ENCODE measurements at regions of chr6 and their contacts with region 1.

Region 1: DNA sequence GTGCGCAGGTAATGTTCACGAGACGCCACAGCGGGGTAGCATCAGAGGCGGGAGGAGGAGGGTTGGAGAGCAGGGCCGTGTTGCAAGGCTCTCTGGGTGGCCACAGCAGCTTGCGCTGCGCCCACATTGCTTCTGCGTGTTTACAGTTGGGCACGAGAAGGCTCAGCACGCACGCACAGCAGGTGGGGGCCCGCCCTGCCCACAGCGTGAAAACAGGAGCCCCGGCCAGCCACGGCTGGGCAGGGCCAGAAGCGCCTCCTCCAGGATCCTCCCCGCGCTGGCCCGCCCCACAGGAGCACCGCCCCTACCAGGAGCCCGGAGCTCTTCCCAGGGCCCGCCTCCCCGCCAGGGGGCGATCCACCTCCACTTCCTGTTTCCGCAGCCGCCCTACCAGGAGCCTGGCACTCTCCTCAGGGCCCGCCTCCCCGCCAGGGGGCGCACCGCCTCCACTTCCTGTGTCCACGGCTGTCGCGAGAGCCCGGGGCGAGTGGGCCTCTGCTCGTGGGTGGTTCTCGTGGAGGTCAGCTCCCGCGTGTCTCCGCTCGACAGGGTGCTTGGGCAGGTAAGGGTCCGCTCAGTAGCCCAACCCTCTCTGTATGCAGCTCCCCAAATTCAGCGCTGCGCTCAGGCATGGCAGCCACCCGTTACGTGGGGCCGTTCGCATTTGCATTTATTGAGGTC is at the start of gene FAM50B:
- DNase-seq: peak; percentile 86
- H3K4me3 ChIP-seq: peak within 1 kb of the TSS; percentile 3 to 31 (median 12)
- H3K27ac ChIP-seq: peak within 1 kb of the TSS; percentile 21
- H3K4me1 ChIP-seq: peaks cover 4% of the 10 kb centered on the region
- H3K27me3 ChIP-seq: no peaks in the 10 kb centered on the region
- CTCF ChIP-seq: peak; percentile 87 to 92
- POLR2A ChIP-seq: peak; percentile 41
- total RNA-seq, gene FAM50B: 10.0 and 10.4 TPM in 2 replicates

Region 2: DNA sequence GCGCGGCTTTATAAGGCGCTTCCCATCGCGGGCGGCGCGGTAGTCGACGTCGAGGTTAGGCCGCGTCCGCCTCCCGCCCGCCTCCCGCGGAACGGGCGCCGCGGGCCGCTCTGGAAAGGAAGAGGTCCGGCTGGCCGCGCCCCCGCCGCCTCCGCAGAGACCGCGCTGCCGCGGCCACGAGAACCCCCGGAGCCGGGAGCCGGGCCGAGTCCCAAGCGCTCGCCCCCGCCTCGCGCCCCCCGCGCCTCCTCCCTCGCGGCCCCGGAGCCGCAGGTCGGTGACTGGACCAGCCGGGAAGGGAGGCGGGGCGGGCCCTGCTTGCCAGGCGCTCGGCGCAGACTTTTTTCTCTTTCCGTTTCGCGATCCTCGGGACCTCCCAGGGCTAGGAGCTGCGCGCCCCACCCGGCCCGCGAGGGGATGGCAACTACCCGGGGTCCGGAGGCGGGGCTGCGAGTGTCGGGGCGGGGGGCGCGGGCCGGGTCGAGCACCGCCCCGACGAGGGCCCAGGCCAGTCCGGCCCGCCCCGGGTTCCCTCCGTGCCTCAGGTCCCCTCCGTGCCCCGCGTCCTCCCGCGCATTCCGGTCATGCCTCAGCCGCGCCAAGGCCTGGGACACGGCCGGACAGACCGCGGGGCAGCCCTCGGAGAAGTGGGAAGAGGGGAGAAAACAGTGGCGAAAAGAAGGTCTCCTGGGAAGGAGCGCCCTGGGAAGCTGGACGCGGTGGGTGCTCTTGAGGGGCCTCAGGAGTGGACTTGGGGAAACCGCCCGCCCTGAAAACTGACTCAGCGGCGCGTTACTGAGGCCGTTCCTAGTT is 97.1 kb before region 1 on chr6:
- CTCF ChIA-PET with region 1: interaction called, 66 read pairs
- POLR2A ChIA-PET with region 1: interaction called, 4 read pairs
- dilution Hi-C with region 1: no loop called
- intact Hi-C with region 1: loop called (anchors 1 kb)
- DNase-seq: peak; percentile 95
- H3K4me3 ChIP-seq: peak overlapping the region; percentile 85 to 96 (median 89)
- H3K27ac ChIP-seq: peak overlapping the region; percentile 99
- H3K4me1 ChIP-seq: peaks cover 42% of the 10 kb centered on the region
- H3K27me3 ChIP-seq: no peaks in the 10 kb centered on the region
- CTCF ChIP-seq: peak; percentile 24 to 60
- POLR2A ChIP-seq: no peak

Region 3: GRCh38 chr6:3825851-3826581 is 23.0 kb before region 1 on chr6:
- CTCF ChIA-PET with region 1: interaction called, 54 read pairs
- POLR2A ChIA-PET with region 1: interaction called, 4 read pairs
- dilution Hi-C with region 1: no loop called
- intact Hi-C with region 1: loop called (anchors 1 kb)
- DNase-seq: peak; percentile 100
- H3K4me3 ChIP-seq: peak overlapping the region in 1 of 3 experiments; percentile 15
- H3K27ac ChIP-seq: peak overlapping the region; percentile 96
- H3K4me1 ChIP-seq: peaks cover 43% of the 10 kb centered on the region
- H3K27me3 ChIP-seq: no peaks in the 10 kb centered on the region
- CTCF ChIP-seq: no peak
- POLR2A ChIP-seq: no peak

Region 4: GRCh38 chr6:3873051-3873450 is 24.0 kb after region 1 on chr6:
- CTCF ChIA-PET with region 1: interaction called, 12 read pairs
- POLR2A ChIA-PET with region 1: no interaction called
- dilution Hi-C with region 1: no loop called
- intact Hi-C with region 1: no loop called
- DNase-seq: no peak
- H3K4me3 ChIP-seq: no peak overlapping the region
- H3K27ac ChIP-seq: no peak overlapping the region
- H3K4me1 ChIP-seq: peaks cover 13% of the 10 kb centered on the region
- H3K27me3 ChIP-seq: no peaks in the 10 kb centered on the region
- CTCF ChIP-seq: no peak
- POLR2A ChIP-seq: no peak

Region 5: GRCh38 chr6:3929281-3929798 is 80.3 kb after region 1 on chr6:
- CTCF ChIA-PET with region 1: interaction called, 69 read pairs
- POLR2A ChIA-PET with region 1: no interaction called
- dilution Hi-C with region 1: no loop called
- intact Hi-C with region 1: loop called (anchors 1 kb)
- DNase-seq: no peak
- H3K4me3 ChIP-seq: no peak overlapping the region
- H3K27ac ChIP-seq: no peak overlapping the region
- H3K4me1 ChIP-seq: no peaks in the 10 kb centered on the region
- H3K27me3 ChIP-seq: no peaks in the 10 kb centered on the region
- CTCF ChIP-seq: no peak
- POLR2A ChIP-seq: no peak

Region 6: DNA sequence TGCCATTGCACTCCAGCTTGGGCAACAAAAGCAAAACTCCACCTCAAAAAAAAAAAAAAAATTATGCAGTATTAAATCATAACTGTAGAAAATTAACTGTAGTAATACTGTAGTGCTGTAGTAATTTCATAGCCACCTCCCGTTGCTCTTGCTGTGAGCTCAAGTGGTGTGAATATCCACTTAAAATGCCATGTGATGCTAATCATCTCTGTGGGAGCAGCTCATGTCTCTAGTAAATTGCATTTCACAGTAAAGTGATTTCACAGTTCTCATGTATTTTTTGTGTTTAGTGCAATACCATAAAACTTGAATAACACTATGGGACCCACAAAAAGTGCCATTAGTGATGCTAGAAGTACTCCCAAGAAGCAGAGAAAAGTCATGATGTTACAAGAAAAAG is 244.2 kb after region 1 on chr6:
- CTCF ChIA-PET with region 1: no interaction called
- POLR2A ChIA-PET with region 1: no interaction called
- dilution Hi-C with region 1: no loop called
- intact Hi-C with region 1: no loop called
- DNase-seq: no peak
- H3K4me3 ChIP-seq: no peak overlapping the region
- H3K27ac ChIP-seq: no peak overlapping the region
- H3K4me1 ChIP-seq: no peaks in the 10 kb centered on the region
- H3K27me3 ChIP-seq: no peaks in the 10 kb centered on the region
- CTCF ChIP-seq: no peak
- POLR2A ChIP-seq: no peak

Region 7: GRCh38 chr6:4635666-4636065 is 786.6 kb after region 1 on chr6:
- CTCF ChIA-PET with region 1: no interaction called
- POLR2A ChIA-PET with region 1: no interaction called
- dilution Hi-C with region 1: no loop called
- intact Hi-C with region 1: no loop called
- DNase-seq: no peak
- H3K4me3 ChIP-seq: no peak overlapping the region
- H3K27ac ChIP-seq: no peak overlapping the region
- H3K4me1 ChIP-seq: peaks cover 11% of the 10 kb centered on the region
- H3K27me3 ChIP-seq: no peaks in the 10 kb centered on the region
- CTCF ChIP-seq: no peak
- POLR2A ChIP-seq: no peak

Measured in endothelial cell of umbilical vein (primary cell).